ENCODE measurements at regions of chr16 and their contacts with region 1.

Region 1: DNA sequence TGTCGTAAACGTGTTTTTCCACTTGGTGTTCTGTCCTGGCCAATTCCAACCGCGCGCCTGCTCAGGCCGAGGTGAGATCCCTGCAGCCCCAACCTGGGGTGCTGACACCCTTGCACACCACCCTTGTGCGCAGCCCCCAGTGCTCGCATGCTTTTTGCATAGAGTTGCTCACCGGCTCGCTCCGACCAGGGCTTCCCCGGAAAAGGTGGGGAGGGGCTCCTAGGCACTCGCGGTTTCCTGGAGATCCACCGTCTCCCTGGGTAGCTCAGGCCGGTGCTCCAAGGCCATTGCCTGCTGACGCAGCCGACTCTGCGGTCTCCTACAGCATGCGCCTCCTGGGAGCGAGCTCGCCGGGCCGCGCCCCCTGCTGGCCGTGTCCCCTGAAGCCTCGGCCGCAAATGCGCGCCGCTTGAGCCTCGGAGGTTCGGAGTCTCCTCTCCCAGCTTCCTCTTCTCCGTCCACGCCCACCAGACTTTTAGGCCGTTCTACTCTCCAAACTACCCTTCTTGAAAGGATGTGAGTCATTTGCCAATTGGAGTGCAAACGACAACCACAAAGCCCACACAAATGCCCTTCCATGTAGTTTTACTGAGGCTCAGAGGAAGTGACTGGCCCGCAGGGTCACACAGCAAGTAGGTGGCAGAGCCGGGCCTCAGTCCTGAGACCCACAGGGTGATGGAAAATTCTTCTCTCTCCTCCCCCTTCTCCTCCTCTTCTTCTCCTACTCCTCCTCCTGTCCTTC is 7.2 kb upstream of the PDP2 start:
- DNase-seq: peak; percentile 95
- ATAC-seq: peak; percentile 96

Region 2: GRCh38 chr16:66608241-66609138 is 264.6 kb before region 1 on chr16:
- intact Hi-C with region 1: loop called (anchors 5 kb)
- DNase-seq: peak; percentile 93
- ATAC-seq: peak; percentile 61

Region 3: DNA sequence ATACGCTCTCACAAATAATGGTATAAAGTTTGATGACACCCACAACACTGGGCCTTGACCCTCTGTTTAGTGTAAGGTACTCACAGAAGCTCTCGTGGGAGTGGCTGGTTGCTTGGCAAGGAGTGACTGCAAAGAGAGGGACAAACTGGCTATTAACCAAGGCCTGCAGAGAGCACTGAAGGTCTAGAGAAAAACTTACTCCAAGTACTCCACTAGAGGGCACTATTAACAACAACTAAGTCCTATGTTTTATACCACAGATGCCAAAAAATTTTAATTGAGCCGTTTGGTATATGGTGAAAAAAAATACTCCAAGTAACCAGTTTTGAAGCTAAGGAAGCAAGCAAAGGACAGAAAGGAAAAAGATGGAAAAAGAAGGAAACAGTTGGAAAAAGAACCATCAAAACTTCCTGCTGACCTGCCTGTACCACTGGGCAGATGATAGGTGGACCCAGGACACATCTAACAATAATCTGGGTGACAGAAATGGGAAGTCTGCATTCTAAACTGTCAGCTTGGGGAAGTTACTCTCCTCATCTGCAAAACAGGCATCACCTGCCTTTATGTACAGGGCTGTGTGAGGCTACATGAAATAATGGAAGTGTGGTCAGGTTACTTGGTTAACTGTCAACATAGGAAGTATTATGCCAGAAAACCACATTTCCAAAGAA is 144.9 kb before region 1 on chr16:
- intact Hi-C with region 1: loop called (anchors 5 kb)
- DNase-seq: peak; percentile 50
- ATAC-seq: peak; percentile 92

Region 4: GRCh38 chr16:66830422-66831404 is 42.4 kb before region 1 on chr16 and contains the start of gene NAE1:
- intact Hi-C with region 1: loop called (anchors 5 kb)
- DNase-seq: peak; percentile 93
- ATAC-seq: peak; percentile 99
- total RNA-seq, gene NAE1: 31.4 TPM

Measured in Right ventricle myocardium superior (tissue), 1 donor.